Dendritic cell treated with granulocyte-macrophage colony-stimulating factor and Interleukin-4, amounts not matched to agents 40 ng/mL and 50 ng/mL, for 4 days (primary cell): ENCODE measurements at regions of chr7 and their contacts with region 1.

Region 1: DNA sequence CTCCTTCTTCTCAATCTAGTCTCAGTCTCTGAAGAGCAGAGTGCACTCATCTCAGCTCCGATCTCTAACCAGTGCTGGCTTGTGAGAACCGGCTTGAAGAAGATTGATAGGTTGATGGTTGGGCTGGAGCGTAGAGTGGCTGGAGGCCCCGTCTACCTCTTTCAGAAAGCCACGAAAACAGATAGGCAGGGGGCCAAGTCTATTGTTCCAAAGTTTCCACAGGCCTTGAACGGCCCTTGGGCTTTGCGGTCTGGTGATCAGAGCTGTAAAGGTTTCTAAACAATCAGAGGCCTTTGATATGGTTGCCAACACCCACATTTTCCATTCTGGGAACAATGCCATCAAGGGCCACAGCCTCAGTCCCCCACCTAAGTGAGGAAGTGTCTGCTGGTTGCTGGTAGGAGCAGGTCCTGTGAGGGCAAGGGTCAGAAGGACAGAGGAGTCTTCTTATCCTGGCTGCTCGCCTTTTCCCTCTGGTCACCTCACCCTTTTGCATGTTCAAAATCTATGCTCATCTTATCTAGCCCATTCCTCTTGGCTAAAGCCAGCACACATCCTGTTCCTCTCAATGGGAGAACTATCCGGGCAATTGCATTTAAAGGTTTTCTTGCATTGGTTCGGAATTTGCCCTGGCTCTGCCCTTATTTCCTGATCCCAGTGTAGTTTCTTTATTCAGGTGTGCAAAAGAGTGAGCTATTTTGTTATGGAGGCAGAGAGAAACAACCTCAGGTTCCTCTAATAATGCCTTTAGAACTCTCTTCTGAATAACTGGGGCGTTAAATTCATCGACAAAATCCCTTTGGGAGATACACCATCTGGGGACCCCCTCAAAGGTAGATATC is 70.3 kb upstream of the KMT2E start:
- H3K4me3 Mint-ChIP-seq: peak overlapping the region; percentile 77
- H3K27ac Mint-ChIP-seq: peak overlapping the region; percentile 100
- H3K4me1 Mint-ChIP-seq: peaks cover 66% of the 10 kb centered on the region
- H3K27me3 Mint-ChIP-seq: no peaks in the 10 kb centered on the region

Region 2: DNA sequence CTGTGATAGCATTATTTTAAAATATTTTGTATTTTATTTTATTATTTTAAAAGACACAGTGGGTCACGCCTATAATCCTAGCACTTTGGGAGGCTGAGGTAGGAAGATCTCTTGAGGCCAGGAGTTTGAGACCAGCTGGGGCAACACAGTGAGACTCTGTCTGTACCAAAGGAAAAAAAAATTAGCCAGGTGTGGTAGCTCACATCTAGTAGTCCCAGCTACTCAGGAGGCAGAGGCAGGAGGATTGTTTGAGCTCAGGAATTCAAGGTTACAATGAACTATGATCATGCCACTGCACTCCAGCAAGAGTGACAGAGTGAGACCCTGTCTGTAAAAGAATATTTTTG is 1906.3 kb before region 1 on chr7:
- intact Hi-C with region 1: no loop called
- H3K4me3 Mint-ChIP-seq: no peak overlapping the region
- H3K27ac Mint-ChIP-seq: no peak overlapping the region
- H3K4me1 Mint-ChIP-seq: no peaks in the 10 kb centered on the region
- H3K27me3 Mint-ChIP-seq: no peaks in the 10 kb centered on the region

Region 3: DNA sequence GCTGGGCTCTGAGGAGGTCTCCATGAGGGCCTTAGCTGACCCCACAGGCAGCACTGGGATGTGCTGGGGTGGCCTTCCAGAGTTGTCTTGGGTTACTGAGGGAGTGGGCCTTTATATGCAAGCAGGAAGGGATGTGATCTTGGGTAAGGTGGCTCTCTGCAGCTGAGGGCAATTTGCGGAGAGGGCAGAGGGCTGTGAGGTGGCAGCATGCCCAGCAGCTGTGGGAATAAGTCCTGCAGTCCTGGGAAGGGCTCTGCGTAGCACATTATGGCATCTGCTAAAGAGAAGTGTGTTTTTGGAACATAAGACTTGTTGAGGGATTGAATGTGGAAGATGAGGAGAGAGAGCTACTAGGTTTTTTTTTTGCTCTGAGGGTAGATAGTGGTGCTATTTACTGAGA is 29.3 kb before region 1 on chr7:
- intact Hi-C with region 1: no loop called
- H3K4me3 Mint-ChIP-seq: no peak overlapping the region
- H3K27ac Mint-ChIP-seq: peak overlapping the region; percentile 4
- H3K4me1 Mint-ChIP-seq: no peaks in the 10 kb centered on the region
- H3K27me3 Mint-ChIP-seq: no peaks in the 10 kb centered on the region

Region 4: GRCh38 chr7:104960741-104961448 is 17.2 kb after region 1 on chr7:
- intact Hi-C with region 1: loop called (anchors 1 kb)
- H3K4me3 Mint-ChIP-seq: no peak overlapping the region
- H3K27ac Mint-ChIP-seq: peak overlapping the region; percentile 91
- H3K4me1 Mint-ChIP-seq: peaks cover 64% of the 10 kb centered on the region
- H3K27me3 Mint-ChIP-seq: no peaks in the 10 kb centered on the region

Region 5: GRCh38 chr7:105013221-105013815 is 69.6 kb after region 1 on chr7:
- intact Hi-C with region 1: loop called (anchors 1 kb)
- H3K4me3 Mint-ChIP-seq: peak overlapping the region; percentile 96
- H3K27ac Mint-ChIP-seq: peak overlapping the region; percentile 100
- H3K4me1 Mint-ChIP-seq: peaks cover 36% of the 10 kb centered on the region
- H3K27me3 Mint-ChIP-seq: no peaks in the 10 kb centered on the region

Region 6: DNA sequence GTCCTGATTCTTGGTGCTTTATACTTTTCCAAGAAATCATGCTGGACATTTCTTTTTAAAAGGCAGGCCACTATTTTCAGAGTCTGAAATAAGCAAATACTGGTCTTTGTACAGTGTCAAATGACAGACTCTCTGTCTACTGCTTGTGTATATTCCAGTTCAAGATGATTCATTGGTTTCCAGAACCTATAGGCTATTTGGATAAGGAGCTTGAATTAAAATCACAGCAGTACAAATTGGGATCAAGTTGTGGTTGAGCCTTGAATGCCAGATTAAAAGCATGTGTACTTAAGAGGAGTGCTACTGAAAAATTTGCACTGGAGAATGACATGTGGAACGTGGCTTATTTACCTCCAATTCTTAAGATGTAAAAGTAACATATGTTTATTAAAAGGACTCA is 81.0 kb after region 1 on chr7:
- intact Hi-C with region 1: loop called (anchors 5 kb)
- H3K4me3 Mint-ChIP-seq: no peak overlapping the region
- H3K27ac Mint-ChIP-seq: no peak overlapping the region
- H3K4me1 Mint-ChIP-seq: peaks cover 71% of the 10 kb centered on the region
- H3K27me3 Mint-ChIP-seq: no peaks in the 10 kb centered on the region